Mucosa of descending colon (tissue), 3 donors: ENCODE measurements at regions of chr1 and their contacts with region 1.

Region 1: DNA sequence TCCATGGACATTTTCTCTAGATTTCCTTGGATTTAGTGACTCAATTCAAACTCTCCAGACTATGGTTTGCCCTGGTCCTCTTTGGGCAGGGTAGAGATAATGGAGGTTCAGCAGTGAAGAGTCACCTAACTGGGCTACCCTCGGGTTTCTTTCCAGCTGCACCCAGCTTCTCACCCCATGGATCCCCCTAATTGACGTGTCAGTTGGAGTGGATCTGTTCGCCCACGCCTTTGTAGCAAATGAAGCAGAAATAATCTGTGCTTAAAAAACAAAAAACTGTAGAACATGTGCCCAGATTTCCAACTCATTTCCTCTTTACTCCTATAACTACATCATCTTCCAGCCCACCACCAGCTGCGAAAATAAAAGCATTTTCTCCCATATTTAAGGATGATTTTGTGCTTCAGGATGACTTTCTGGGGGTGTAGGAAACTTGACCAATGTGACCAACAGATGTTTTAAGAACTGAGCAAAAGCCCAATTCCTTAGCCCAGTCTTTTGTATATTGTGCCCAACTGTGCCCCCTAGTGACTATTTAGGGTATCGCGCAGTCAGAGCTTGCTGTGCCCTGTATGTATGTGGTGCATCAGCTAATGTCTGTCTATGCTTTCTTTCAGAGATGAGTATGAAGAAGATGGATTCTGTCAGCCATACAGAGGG is 66.5 kb upstream of the UBE2U start:
- DNase-seq: peak in 2 of 3 donors; percentile 74 to 94
- ATAC-seq: peak; percentile 91
- H3K4me3 ChIP-seq: no peak overlapping the region
- H3K4me1 ChIP-seq: no peaks in the 10 kb centered on the region
- CTCF ChIP-seq: peak; percentile 79

Region 2: DNA sequence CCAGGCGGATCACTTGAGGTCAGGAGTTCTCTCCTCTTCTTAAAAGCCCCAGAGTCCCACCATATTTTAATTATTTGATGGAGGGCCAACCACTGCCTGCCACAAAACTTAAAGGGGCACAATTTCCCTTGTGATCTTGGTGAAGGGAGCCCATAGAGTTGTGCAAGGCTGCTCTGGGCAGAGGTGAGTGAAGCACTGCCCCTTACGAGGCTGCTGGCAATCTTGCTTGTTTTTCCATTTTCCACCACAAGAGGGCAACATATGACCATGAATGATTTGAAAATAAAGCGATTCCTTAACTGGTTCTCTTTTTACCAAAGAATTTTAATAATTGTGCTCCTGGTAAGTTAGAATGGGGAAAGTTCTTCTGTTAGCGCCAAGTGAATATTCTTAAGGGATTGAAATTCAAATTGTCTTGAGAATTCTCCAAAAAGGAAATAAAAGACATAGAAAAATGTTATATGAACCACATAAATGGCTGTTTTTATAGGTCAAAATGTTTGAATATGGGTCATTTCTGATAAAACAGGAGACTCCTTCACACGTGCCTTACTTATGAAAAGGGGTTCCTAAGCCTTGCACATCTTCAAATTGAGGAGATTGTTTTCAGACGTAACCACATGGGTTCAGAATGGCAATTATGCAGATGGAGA is 521.0 kb before region 1 on chr1:
- intact Hi-C with region 1: loop called in 1 of 2 experiments (anchors 10 kb)
- DNase-seq: peak in 1 of 3 donors; percentile 90
- ATAC-seq: peak; percentile 85
- H3K4me3 ChIP-seq: no peak overlapping the region
- H3K4me1 ChIP-seq: no peaks in the 10 kb centered on the region
- CTCF ChIP-seq: peak; percentile 68

Region 3: GRCh38 chr1:63691701-63692425 is 445.0 kb before region 1 on chr1:
- intact Hi-C with region 1: loop called (anchors 10 kb)
- DNase-seq: peak in 1 of 3 donors; percentile 87
- ATAC-seq: peak; percentile 92
- H3K4me3 ChIP-seq: peak overlapping the region; percentile 3
- H3K4me1 ChIP-seq: peaks cover 7% of the 10 kb centered on the region
- CTCF ChIP-seq: peak; percentile 36

Region 4: DNA sequence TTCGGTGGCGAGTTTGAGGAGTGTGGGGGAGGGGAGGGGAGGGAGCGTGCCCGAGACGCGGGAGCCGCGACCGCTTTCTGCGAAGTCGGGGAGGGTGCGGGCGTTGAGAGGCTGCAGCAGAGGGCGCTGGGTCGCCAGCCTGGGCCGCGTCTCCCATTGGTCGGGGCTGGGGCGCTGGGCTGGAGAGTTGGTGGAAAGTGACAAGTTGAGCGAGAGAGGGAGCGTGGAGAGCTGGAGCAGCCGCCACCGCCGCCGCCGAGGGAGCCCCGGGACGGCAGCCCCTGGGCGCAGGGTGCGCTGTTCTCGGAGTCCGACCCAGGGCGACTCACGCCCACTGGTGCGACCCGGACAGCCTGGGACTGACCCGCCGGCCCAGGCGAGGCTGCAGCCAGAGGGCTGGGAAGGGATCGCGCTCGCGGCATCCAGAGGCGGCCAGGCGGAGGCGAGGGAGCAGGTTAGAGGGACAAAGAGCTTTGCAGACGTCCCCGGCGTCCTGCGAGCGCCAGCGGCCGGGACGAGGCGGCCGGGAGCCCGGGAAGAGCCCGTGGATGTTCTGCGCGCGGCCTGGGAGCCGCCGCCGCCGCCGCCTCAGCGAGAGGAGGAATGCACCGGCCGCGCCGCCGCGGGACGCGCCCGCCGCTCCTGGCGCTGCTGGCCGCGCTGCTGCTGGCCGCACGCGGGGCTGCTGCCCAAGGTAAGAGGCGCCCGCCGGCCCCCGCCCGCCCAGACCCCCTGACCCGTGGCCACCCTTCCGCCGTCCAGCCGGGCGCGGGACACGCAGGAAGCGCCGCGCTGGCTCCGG is 362.9 kb before region 1 on chr1 and contains the start of gene ROR1:
- intact Hi-C with region 1: loop called in 1 of 2 experiments (anchors 10 kb)
- DNase-seq: peak; percentile 85 to 89 (median 86)
- ATAC-seq: peak; percentile 97
- H3K4me3 ChIP-seq: peak within 1 kb of the TSS; percentile 33
- H3K4me1 ChIP-seq: no peaks in the 10 kb centered on the region
- CTCF ChIP-seq: peak; percentile 57
- total RNA-seq, gene ROR1: 3.1 to 19.8 (median 3.4) TPM

Region 5: GRCh38 chr1:64231153-64231552 is 94.3 kb after region 1 on chr1:
- intact Hi-C with region 1: no loop called
- DNase-seq: no peak
- ATAC-seq: no peak
- H3K4me3 ChIP-seq: no peak overlapping the region
- H3K4me1 ChIP-seq: no peaks in the 10 kb centered on the region
- CTCF ChIP-seq: no peak

Region 6: DNA sequence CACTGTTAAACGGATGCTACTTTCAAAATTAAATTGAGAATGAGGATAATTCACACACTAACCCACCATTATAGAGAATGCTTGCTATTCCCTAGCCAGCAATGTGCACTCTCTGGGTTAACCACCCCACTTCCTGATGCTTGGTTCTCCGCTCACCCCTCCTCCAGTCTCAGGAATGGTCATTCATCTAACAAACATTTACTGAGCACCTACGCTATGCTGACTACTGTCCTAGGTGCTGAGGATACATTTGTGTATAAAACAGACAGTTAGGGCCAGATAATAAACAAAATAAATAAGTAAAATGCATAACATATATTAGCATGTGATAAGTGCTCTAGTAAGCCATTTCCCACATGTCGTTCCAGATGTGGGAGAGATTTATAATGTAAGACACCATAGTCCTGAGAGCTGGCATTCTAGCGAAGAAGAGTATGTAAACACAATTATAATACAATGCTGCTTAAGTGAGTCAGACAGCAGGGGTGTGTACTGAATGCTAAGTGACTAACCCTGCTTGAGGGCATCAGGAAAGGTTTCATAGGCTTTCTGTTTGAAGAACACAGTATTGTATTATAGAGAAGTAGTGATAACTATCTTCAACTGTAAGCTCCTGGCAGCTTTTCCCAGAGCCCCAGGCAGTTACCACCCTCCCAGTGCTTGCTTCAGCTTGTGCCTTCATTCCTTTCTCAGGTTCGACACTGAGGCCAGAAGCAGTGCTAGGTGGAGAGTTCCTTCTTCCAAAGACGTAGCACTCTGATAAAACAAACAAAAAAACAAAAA is 206.4 kb after region 1 on chr1:
- intact Hi-C with region 1: no loop called
- DNase-seq: no peak
- ATAC-seq: peak; percentile 87
- H3K4me3 ChIP-seq: no peak overlapping the region
- H3K4me1 ChIP-seq: no peaks in the 10 kb centered on the region
- CTCF ChIP-seq: no peak